ENCODE measurements at regions of chr14 and their contacts with region 1.

Region 1: DNA sequence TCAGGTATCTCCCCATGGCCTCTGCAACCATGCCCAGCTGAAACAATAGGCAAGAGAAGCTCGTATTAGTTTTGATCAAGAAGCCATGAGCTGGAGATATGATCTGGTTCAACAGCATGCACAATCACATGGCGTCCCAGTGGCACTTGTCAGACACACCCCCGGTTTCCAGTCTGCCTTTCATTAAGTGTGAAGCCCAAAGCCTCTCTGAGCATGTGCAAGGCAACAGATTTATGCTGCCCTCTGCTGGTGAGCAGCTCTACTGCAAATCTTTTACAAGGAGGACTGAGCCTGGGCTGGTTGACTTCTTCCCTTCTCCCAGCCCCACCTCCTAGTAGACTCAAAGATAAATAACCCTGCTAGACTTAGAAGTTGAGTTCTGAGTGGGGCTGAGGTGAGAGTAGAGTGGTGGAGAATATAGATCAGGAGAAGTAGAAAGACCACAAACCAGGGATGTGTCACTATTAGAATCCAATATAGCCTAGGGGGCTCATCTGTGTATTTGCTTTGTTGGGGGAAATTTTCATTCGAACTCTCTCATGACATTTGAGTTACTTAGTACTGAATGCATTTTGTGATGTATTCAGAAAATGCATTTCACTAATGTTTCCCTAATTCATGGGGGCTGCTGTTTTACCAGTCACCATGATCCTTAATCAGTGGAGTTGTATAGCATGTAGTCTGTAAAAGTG is 53.7 kb upstream of the MBIP start:
- DNase-seq: peak; percentile 55 to 85 (median 74)
- ATAC-seq: peak; percentile 96 to 99 (median 98)
- H3K4me3 ChIP-seq: no peak overlapping the region
- H3K27ac ChIP-seq: no peak overlapping the region
- H3K4me1 ChIP-seq: no peaks in the 10 kb centered on the region
- H3K27me3 ChIP-seq: no peaks in the 10 kb centered on the region
- CTCF ChIP-seq: peak; percentile 62 to 92 (median 83)

Region 2: DNA sequence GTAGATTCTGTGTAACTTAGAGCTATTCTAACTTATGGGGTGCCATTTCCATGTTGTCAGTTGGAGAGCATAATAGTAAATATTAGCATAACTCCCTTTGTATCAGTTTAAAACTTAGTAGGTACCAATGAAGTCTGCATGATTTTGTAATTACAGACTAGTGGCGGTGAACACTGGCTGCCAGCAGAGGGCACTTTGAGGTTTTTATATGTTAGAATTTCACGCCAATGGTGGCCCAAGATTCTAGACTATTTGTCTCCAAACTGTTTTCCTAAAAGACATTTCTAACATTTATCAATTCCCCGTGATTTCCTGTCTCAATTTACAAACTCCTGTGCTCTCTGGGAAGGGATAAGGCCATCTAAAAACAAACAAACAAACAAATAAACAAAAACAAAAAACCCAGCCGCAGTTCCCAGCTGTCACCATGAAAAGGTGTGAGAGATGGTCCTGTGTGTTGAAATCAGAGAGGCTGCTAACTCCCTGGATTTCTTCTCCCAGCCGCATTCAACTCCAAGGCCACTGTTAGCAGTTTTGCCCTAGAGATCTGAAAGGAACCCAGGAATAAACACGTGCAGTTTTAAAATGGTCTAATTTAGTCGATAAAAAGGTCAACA is 490.3 kb before region 1 on chr14:
- intact Hi-C with region 1: loop called in 1 of 3 experiments (anchors 10 kb)
- DNase-seq: peak in 1 of 6 donors; percentile 29
- ATAC-seq: peak in 3 of 4 donors; percentile 49 to 73 (median 70)
- H3K4me3 ChIP-seq: no peak overlapping the region
- H3K27ac ChIP-seq: no peak overlapping the region
- H3K4me1 ChIP-seq: no peaks in the 10 kb centered on the region
- H3K27me3 ChIP-seq: no peaks in the 10 kb centered on the region
- CTCF ChIP-seq: peak; percentile 24 to 50 (median 38)

Region 3: GRCh38 chr14:36070031-36070719 is 304.0 kb before region 1 on chr14:
- intact Hi-C with region 1: loop called in 1 of 3 experiments (anchors 10 kb)
- DNase-seq: peak; percentile 38 to 82 (median 74)
- ATAC-seq: peak; percentile 88 to 96 (median 92)
- H3K4me3 ChIP-seq: no peak overlapping the region
- H3K27ac ChIP-seq: peak overlapping the region in 1 of 4 donors; percentile 23
- H3K4me1 ChIP-seq: peaks cover 3 to 13% (median 6%) of the 10 kb centered on the region in 3 donors
- H3K27me3 ChIP-seq: no peaks in the 10 kb centered on the region
- CTCF ChIP-seq: peak; percentile 41 to 61 (median 56)

Region 4: GRCh38 chr14:36538051-36538450 is 163.9 kb after region 1 on chr14:
- intact Hi-C with region 1: no loop called
- DNase-seq: no peak
- ATAC-seq: no peak
- H3K4me3 ChIP-seq: no peak overlapping the region
- H3K27ac ChIP-seq: no peak overlapping the region
- H3K4me1 ChIP-seq: no peaks in the 10 kb centered on the region
- H3K27me3 ChIP-seq: peaks cover 0 to 9% (median 0%) of the 10 kb centered on the region in 4 donors
- CTCF ChIP-seq: no peak